ENCODE measurements at regions of chr3 and their contacts with region 1.

Region 1: DNA sequence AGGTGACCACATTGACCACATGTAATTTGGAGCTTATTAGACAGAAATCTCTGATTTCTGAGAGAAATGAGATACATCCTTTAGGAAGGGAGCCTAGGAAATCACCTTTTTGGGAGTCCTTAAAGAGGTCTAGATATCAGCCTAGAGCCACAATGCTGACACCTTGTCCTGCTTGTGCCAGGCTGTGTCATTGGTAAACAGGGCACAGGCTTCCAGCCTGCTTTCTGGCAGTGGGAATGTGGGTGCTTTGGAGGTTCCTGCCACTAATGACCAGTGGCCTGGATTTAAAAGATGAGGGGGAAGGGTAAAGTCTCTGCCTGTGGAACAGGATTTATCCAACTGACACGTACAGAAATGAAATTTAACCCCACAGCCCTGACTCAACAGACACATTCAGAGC is 169.8 kb upstream of the KBTBD8 start:
- DNase-seq: no peak
- H3K4me3 ChIP-seq: no peak overlapping the region
- H3K27ac ChIP-seq: no peak overlapping the region
- H3K4me1 ChIP-seq: no peaks in the 10 kb centered on the region
- H3K27me3 ChIP-seq: peaks cover 7% of the 10 kb centered on the region

Region 2: DNA sequence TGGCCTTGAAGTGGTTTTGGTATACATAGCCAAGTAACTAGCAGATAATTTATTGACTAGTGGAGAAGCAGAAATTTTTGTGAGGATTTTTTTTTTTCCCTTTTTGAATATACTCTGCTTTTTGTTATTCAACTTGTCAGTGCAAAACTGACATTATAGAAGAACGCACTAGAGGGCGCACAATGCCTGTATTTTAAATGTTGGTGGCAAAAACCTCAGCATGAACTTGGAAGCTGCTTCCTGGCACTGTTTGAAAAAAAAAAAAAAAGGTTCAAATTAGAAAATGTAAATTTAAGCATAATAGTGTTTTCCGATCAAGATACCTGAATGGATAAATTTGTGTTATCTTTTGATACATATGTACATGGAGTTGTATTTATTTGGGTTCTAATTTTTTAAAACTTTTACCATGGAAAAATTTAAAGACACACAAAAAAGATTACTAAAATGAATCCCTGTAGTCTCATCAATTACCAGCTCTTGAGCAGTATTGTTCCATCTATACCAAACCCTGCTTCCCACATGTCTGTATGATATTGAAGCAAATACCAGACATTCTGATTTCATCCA is 551.5 kb before region 1 on chr3:
- in situ Hi-C with region 1: loop called (anchors 5 kb)
- DNase-seq: peak; percentile 82
- H3K4me3 ChIP-seq: no peak overlapping the region
- H3K27ac ChIP-seq: no peak overlapping the region
- H3K4me1 ChIP-seq: no peaks in the 10 kb centered on the region
- H3K27me3 ChIP-seq: no peaks in the 10 kb centered on the region

Region 3: GRCh38 chr3:66998113-66998903 is 170.0 kb after region 1 on chr3 and contains the start of gene KBTBD8:
- in situ Hi-C with region 1: no loop called
- DNase-seq: peak; percentile 99
- H3K4me3 ChIP-seq: peak within 1 kb of the TSS; percentile 90
- H3K27ac ChIP-seq: peak within 1 kb of the TSS; percentile 60
- H3K4me1 ChIP-seq: peaks cover 8% of the 10 kb centered on the region; the same call in 1 of the 2 replicates
- H3K27me3 ChIP-seq: peaks cover 5% of the 10 kb centered on the region; the same call in 1 of the 2 replicates
- total RNA-seq, gene KBTBD8: 0.76 and 0.86 TPM in 2 replicates